HEK293 (cell line): ENCODE measurements at regions of chr3 and their contacts with region 1.

Region 1: DNA sequence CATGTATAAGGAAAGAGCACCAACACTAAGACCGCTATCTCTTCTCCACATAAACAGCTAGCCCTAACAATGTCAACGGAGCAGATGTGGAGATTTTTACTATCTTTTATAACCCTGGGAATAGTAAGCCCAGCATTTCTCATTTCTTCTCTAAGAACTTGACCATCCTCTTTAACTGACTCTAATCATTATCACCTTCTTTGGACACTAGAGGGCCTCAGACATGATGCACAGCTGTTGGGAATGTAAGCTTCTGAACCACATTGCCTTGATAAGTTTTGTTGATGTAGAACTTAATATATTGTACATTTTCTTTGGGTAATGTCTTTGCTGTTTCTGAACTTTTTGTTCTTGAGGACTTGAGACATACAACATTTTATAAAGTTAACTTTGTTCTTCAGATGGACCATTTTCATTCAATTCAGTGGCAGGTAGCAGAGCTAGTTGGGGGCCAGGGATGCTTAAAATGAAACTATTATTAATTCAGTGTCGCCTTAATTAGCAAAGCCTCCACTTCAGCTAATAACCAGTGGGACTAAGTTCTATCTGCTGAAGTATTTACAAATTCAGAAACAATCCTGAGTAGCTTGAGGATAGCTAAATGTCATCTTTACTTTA is 9.6 kb upstream of the TAGLN3 start:
- H3K4me3 ChIP-seq: no peak overlapping the region
- H3K27ac ChIP-seq: no peak overlapping the region
- H3K4me1 ChIP-seq: no peaks in the 10 kb centered on the region
- CTCF ChIP-seq: no peak; the same call in 1 of the 2 replicates

Region 2: GRCh38 chr3:111978493-111979433 is 10.4 kb before region 1 on chr3 and contains the start of gene ABHD10:
- CTCF ChIA-PET with region 1: interaction called, 11 read pairs
- POLR2A ChIA-PET with region 1: interaction called, 9 read pairs
- H3K4me3 ChIP-seq: peak within 1 kb of the TSS; percentile 89
- H3K27ac ChIP-seq: peak within 1 kb of the TSS; percentile 45
- H3K4me1 ChIP-seq: no peaks in the 10 kb centered on the region
- CTCF ChIP-seq: no peak

Region 3: DNA sequence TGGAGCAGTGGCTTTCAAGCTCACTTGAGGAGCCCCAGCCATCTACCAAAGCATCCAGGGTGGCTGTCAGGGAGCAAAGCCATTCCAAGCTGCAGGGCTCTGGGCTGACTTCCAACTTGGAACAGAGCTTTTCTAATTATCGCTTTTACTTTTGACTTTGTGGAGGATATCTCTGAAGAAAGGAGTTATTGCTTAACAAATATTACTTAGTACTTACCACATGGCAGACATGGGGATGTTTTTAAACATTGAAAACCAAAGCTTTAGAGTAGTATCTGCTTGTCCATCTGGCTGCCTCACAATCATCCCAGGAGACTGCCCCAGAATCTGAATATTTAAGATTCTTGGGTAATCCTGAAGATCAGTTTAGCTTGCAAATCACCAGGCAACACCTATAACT is 18.5 kb after region 1 on chr3:
- CTCF ChIA-PET with region 1: interaction called, 31 read pairs
- POLR2A ChIA-PET with region 1: no interaction called
- H3K4me3 ChIP-seq: no peak overlapping the region
- H3K27ac ChIP-seq: no peak overlapping the region
- H3K4me1 ChIP-seq: no peaks in the 10 kb centered on the region
- CTCF ChIP-seq: no peak

Region 4: DNA sequence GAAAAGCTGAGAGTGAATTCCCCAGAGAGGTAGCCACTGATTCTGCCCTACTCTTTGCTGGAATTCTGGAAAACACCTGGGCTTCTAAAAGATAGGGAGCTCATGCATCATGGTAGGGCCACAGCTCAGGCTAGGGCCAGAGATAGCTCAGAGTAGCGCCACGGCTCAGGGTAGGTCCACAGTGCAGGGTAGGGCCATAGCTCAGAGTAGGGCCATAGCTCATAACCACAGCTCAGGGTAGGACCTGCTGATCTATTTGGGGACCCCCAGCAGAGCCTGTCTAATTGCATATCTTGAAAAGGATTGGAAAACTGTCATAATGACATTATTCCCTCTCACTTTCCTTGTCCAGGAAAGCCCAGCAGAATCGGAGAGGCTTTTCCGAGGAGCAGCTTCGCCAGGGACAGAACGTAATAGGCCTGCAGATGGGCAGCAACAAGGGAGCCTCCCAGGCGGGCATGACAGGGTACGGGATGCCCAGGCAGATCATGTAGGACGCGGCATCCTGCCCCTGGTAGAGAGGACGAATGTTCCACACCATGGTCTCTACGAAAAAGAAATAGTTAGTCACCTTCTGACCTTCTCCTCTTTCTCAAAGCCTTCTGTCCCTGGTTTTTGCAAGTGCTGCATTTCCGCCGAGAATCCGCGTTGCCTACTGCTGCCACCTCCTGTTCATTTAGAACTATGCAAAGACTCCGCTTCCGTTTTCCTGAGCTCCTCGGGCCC is 24.1 kb after region 1 on chr3:
- CTCF ChIA-PET with region 1: interaction called, 31 read pairs
- POLR2A ChIA-PET with region 1: no interaction called
- H3K4me3 ChIP-seq: no peak overlapping the region
- H3K27ac ChIP-seq: no peak overlapping the region
- H3K4me1 ChIP-seq: no peaks in the 10 kb centered on the region
- CTCF ChIP-seq: no peak

Region 5: DNA sequence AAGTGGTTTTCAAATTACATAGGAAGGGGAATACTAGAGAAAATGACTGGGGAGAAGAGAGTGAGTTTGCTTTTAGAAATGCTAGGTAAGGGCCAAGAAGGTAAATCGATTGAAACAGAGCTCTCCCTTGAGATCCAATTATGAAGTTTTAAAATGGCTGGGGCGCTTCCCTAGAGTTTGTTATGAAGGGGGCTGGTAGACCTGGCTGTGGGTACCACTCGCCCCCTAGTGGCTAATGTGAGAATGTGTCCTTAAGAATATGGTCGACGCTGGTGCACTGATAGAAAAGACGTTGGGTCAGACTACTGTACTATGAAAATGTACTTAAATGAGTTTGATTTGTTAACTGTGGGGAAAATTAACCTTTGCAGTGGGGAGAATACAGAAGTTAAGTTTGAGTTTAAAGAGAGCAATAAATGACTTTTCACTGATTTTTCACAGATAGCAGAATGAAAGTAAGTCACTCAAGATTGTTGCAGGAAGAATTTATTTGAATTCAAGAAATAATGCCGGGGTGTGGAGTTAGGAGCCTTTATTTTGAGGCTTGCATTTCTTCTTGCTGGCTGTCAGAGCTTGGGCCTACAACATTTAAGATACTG is 54.5 kb after region 1 on chr3:
- CTCF ChIA-PET with region 1: interaction called, 29 read pairs
- POLR2A ChIA-PET with region 1: no interaction called
- H3K4me3 ChIP-seq: no peak overlapping the region
- H3K27ac ChIP-seq: no peak overlapping the region
- H3K4me1 ChIP-seq: no peaks in the 10 kb centered on the region
- CTCF ChIP-seq: peak; percentile 46